HEK293 (cell line): ENCODE measurements at regions of chr17 and their contacts with region 1.

Region 1: DNA sequence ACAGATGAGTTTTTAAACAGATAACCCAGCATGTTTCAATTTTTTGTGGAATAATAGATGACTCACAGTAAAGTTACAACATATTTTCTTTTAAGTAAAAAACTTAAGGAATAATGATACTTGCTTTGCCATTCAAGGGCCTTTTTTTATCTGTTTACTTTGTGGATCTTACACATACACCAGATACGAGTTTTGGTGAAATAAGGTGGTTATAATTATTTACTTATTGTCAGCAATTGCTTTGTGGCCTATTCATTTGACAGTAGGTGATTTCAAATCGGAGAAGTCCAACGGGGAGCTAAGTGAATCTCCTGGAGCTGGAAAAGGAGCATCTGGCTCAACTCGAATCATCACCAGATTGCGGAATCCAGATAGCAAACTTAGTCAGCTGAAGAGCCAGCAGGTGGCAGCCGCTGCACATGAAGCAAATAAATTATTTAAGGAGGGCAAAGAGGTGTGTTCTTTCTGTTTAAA is 66.3 kb downstream of the BPTF start:
- H3K4me3 ChIP-seq: no peak overlapping the region
- H3K27ac ChIP-seq: no peak overlapping the region
- H3K4me1 ChIP-seq: no peaks in the 10 kb centered on the region
- CTCF ChIP-seq: 0 out of 2 replicates have a peak, but pooled peaks have one; percentile 31

Region 2: DNA sequence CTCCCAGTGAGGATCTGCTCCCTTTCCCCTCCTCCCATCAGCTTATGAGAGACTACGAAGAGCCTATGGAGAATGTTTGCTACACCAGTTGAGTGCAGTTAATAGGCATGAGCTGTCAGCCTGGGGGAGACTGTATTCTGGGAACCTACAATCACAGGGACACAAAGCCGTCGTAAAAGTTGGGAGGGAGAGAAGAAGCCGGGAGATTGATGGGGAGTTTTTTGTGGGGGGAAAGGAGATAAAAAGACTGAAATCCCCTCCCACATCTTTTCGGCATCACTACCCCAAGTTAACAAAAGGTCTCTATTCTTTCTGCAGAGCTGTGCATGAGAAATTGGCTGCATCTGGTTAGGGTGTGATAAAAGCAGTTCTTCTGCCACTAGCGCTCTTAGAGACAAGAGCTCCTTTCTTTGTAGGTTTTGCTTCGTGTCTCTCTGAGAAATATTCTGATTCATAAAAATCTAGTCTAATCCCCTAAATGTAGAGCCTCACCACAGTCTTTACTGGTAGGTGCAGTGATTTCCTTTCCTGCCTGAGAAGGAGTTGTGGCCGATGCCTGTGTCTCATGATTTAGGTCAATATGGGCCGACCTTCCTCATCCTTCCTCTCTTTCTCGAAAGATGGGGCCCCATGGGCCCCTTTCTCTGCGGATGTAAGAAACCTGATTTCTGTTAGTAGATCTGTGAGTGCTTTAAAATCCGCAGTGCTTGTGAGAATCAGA is 11.1 kb after region 1 on chr17:
- CTCF ChIA-PET with region 1: interaction called, 10 read pairs
- POLR2A ChIA-PET with region 1: interaction called, 6 read pairs
- H3K4me3 ChIP-seq: no peak overlapping the region
- H3K27ac ChIP-seq: no peak overlapping the region
- H3K4me1 ChIP-seq: no peaks in the 10 kb centered on the region
- CTCF ChIP-seq: no peak

Region 3: DNA sequence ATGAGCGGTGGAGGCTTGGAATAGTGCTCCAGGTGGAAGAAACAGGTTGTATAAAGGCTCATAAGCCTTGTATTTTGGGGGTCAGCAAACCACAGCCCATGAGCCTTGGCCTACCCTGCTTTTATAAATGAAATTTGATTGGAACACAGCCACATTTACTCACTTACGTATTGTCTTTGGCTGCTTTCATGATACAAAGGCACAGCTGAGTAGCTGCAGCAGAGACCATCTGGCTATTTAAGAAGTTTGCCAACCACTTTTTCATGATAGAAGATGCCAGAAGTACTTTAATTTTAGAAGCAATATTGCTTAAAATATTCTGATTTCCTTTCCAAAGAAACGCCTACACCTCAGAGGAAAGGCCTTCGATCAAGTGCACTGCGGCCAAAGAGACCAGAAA is 30.9 kb after region 1 on chr17:
- CTCF ChIA-PET with region 1: no interaction called
- POLR2A ChIA-PET with region 1: no interaction called
- H3K4me3 ChIP-seq: no peak overlapping the region
- H3K27ac ChIP-seq: no peak overlapping the region
- H3K4me1 ChIP-seq: no peaks in the 10 kb centered on the region
- CTCF ChIP-seq: no peak

Region 4: GRCh38 chr17:67959288-67959900 is 67.8 kb after region 1 on chr17:
- CTCF ChIA-PET with region 1: no interaction called
- POLR2A ChIA-PET with region 1: no interaction called
- H3K4me3 ChIP-seq: no peak overlapping the region
- H3K27ac ChIP-seq: no peak overlapping the region
- H3K4me1 ChIP-seq: no peaks in the 10 kb centered on the region
- CTCF ChIP-seq: no peak